Posterior vena cava (tissue), 2 donors: ENCODE measurements at regions of chr19 and their contacts with region 1.

Region 1: GRCh38 chr19:48152551-48152950 is 17.6 kb downstream of the LIG1 start:
- DNase-seq: no peak

Region 2: GRCh38 chr19:47973529-47973928 is 179.0 kb before region 1 on chr19:
- intact Hi-C with region 1: loop called in 1 of 2 experiments (anchors 10 kb)
- DNase-seq: no peak

Region 3: GRCh38 chr19:48102870-48103751 is 49.4 kb before region 1 on chr19:
- intact Hi-C with region 1: loop called (anchors 5 to 10 kb)
- DNase-seq: peak; percentile 3

Region 4: DNA sequence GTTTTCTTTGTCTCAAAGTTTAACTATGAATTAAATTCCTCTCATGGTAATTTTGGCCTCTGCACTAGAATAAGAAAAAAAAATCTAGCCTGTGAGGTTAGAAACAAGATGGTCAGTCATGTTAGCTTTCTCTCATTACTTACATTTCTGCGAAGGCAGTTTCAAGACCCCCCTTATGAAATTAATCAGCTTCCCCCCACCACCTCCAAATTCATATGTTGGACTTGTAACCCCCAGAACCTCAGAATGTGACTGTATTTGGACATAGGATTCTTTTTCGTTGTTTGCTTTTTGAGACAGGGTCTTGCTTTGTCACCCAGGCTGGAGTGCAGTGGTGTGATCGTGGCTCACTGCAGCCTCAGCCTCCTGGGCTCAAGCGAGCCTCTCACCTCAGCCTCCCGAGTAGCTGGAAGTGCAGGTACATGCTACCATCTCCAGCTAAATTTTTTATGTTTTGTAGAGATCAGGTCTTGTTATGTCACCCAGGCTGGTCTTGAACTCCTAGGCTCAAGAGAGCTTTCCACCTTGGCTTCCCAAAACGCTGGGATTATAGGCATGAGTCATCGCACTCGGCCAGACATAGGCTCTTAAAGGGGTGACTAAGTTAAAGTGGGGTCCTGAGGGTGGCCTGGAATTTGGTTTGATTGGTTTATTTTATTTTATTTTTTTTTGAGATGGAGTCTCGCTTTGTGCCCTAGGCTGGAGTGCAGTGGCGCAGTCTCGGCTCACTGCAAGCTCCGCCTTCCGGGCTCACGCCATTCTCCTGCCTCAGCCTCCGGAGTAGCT is 43.4 kb before region 1 on chr19:
- intact Hi-C with region 1: loop called (anchors 5 to 10 kb)
- DNase-seq: no peak